Caco-2 (cell line): ENCODE measurements at regions of chr6 and their contacts with region 1.

Region 1: GRCh38 chr6:22906091-22906555 is 336.8 kb downstream of the HDGFL1 start:
- DNase-seq: peak in 1 of 2 experiments; percentile 55
- H3K4me3 ChIP-seq: no peak overlapping the region
- H3K4me3 Mint-ChIP-seq: no peak overlapping the region
- H3K27ac Mint-ChIP-seq: peak overlapping the region; percentile 8
- H3K4me1 ChIP-seq: peaks cover 13% of the 10 kb centered on the region; the same call in 1 of the 2 replicates
- H3K4me1 Mint-ChIP-seq: peaks cover 21% of the 10 kb centered on the region
- H3K27me3 ChIP-seq: no peaks in the 10 kb centered on the region
- H3K27me3 Mint-ChIP-seq: no peaks in the 10 kb centered on the region
- CTCF ChIP-seq: peak; percentile 29 to 49

Region 2: GRCh38 chr6:22958677-22959076 is 52.6 kb after region 1 on chr6:
- CTCF ChIA-PET with region 1: no interaction called
- POLR2A ChIA-PET with region 1: no interaction called
- intact Hi-C with region 1: no loop called
- DNase-seq: no peak
- H3K4me3 ChIP-seq: no peak overlapping the region
- H3K4me3 Mint-ChIP-seq: no peak overlapping the region
- H3K27ac Mint-ChIP-seq: peak overlapping the region; percentile 77
- H3K4me1 ChIP-seq: peaks cover 29% of the 10 kb centered on the region
- H3K4me1 Mint-ChIP-seq: peaks cover 32% of the 10 kb centered on the region
- H3K27me3 ChIP-seq: no peaks in the 10 kb centered on the region
- H3K27me3 Mint-ChIP-seq: no peaks in the 10 kb centered on the region
- CTCF ChIP-seq: no peak

Region 3: DNA sequence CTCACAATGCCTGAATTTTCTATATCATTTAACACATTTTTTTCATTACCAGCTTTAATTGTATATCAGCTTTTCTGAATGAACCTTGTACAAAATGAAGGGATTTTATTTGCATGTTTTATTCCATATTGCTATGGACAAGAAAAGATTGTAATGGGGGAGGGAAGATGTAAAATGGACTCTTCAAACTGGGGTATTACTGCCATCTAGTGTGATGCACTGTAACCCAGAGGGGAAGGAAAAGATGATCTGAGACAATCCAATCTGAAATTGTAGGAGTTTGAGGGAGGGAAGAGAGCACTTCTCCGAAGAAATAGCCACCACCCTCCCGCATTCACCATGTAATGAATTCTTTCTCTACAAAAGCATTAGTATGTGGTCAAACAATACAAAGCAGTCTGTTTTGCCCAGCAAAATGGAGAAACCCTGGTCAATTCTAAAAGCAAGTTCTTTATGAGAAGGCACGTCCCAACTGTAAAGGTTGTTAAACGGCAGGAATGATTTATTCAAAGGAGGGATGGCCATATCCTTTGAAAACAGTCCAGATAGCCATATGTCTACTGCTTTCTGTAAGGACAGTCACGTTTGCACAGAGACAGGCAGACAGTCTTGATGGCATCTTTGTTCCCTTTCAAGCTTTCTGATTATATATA is 540.4 kb after region 1 on chr6:
- CTCF ChIA-PET with region 1: no interaction called
- POLR2A ChIA-PET with region 1: no interaction called
- intact Hi-C with region 1: loop called (anchors 1 kb)
- DNase-seq: peak in 1 of 2 experiments; percentile 25
- H3K4me3 ChIP-seq: no peak overlapping the region
- H3K4me3 Mint-ChIP-seq: no peak overlapping the region
- H3K27ac Mint-ChIP-seq: no peak overlapping the region
- H3K4me1 ChIP-seq: no peaks in the 10 kb centered on the region
- H3K4me1 Mint-ChIP-seq: no peaks in the 10 kb centered on the region
- H3K27me3 ChIP-seq: no peaks in the 10 kb centered on the region
- H3K27me3 Mint-ChIP-seq: no peaks in the 10 kb centered on the region
- CTCF ChIP-seq: peak; percentile 31 to 47